Cardiac septum (tissue), 1 donor: ENCODE measurements at regions of chr19 and their contacts with region 1.

Region 1: DNA sequence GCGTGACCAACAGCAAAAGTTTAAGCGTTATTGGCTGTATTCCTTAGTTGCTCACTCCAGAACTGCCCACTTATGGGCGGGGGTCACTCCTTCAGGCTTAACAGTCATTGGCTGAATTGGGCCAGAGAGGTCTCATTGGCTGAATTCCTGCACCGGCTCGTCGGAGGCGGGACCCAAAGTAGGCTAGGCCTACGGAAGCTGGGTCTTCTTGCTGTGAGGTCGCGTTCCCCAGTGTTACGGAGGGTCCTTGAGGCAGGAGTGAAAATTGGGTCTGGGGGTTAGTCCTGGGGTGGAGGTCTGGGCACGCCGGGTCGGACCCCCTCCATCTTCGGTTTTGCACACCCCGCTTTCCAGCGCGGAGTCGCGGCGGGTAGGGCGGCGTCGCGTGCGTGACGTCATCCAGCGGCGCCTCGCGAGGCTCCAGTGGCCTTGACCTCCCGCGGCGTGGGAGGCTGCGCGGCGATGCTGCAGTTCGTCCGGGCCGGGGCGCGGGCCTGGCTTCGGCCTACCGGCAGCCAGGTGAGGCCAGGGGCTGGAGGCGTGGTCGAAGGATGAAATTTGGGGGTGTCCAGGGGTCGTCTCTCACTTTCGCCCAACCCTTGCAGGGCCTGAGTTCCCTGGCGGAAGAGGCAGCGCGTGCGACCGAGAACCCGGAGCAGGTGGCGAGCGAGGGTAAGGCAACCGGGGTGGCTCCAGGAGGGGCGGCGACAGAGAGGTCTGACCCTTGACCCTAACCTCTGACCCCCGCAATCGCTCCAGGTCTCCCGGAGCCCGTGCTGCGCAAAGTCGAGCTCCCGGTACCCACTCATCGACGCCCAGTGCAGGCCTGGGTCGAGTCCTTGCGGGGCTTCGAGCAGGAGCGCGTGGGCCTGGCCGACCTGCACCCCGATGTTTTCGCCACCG is at the start of gene MRPL4:
- DNase-seq: peak; percentile 98
- total RNA-seq, gene MRPL4: 71.8 TPM

Region 2: DNA sequence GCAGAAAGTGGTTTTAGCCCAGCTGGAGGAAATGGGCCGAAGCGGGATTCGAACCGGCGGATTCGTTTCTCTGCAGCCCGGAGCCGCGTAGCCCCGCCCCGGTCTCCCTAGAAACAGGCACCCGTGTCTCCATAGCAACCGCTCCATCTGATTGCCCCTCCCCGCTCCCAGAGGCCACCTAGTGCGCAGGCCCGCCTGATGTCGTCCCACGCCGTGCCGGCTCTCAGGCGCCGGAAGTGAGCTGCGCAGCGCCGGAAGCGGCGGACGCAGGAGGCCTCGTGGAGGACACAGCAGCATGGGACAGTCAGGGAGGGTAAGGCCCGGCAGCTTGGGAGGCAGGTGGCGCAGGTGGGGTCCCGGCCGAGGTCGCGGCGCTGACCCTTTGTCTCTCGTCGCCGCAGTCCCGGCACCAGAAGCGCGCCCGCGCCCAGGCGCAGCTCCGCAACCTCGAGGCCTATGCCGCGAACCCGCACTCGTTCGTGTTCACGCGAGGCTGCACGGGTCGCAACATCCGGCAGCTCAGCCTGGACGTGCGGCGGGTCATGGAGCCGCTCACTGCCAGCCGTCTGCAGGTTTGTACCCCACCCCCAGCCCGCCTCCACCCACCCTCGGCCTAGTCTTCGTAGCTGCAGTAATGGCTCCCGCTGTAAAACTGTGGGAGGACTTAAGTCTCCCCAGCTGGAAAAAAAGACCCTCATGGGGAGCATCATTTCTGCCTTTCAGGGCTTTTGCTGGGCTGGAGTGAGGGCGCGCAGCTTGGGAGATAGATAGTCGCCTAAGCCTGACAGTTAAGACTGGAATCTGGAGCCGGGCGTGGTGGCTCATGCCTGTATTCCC is 145.7 kb before region 1 on chr19 and contains the start of gene PPAN:
- intact Hi-C with region 1: loop called (anchors 5 kb)
- DNase-seq: peak; percentile 98
- total RNA-seq, gene PPAN: 29.5 TPM

Region 3: DNA sequence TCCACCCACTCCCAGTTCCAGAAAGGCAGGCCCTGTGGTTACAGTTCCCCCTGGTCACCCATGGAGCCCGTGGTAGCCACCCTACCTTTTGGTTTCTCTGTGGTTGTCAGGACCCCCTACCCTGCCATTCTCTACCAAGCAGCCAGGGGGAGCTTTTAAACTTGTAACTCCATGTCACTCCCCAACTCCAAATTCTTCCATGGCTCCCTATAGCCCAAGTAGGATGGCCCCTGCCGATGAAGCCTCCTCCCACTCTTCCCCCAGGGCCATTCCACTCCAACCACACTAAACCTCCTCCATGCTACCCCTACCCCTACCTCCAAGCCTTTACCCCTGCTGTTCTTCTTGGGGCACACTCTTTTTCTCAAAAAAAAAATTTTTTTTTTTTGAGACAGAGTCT is 23.1 kb before region 1 on chr19:
- intact Hi-C with region 1: loop called (anchors 2 kb)
- DNase-seq: no peak

Region 4: GRCh38 chr19:10424011-10424637 is 172.1 kb after region 1 on chr19:
- intact Hi-C with region 1: no loop called
- DNase-seq: peak; percentile 87